Upper lobe of right lung (tissue), 1 donor: ENCODE measurements at regions of chrX and their contacts with region 1.

Region 1: DNA sequence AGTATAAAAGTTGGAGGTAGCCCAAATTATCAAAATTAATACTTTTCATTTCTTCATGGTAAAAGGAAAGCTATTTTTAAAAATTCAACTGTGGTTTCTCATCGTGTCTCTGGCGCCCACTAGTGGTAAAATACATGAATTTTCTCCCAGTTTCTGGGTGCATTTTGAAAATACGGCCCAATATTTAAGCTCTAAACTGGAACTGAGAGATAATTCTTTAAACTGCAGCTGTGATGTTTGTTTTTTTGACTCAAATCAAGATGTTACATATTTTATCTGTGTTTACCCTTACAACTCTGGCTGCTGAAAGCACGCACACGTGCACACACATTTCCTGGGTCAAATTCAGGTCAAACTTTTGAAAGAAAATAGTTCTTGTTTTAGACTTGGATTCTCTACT is 123.9 kb upstream of the ACSL4 start:
- DNase-seq: no peak
- ATAC-seq: no peak
- H3K4me3 ChIP-seq: no peak overlapping the region
- H3K27ac ChIP-seq: no peak overlapping the region
- H3K4me1 ChIP-seq: peaks cover 6% of the 10 kb centered on the region
- H3K27me3 ChIP-seq: no peaks in the 10 kb centered on the region
- CTCF ChIP-seq: peak; percentile 71

Region 2: DNA sequence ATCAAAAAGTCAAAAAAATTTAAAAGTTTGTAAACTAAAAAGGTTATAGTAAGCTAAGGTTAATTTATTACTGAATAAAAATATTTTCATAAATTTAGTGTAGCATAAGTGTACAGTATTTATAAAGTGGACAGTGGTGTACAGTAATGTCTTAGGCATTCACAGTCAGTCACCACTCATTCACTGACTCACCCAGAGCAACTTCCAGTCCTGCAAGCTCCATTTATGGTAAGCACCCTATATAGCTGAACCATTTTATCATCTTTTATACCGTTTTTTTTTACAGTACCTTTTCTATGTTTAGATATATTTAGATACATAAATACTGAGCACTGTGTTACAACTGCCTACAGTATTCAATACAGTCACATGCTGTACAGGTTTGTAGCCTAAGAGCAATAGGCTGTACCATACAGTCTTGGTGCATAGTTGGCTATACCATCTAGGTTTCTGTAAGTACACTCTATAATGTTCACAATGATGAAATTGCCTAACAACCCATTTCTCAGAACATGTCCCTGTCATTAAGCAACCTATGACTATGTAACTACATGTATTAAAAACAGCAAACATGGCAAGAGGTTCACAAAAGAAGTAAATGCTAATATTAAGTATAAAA is 142.5 kb before region 1 on chrX:
- intact Hi-C with region 1: loop called (anchors 10 kb)
- DNase-seq: no peak
- ATAC-seq: no peak
- H3K4me3 ChIP-seq: no peak overlapping the region
- H3K27ac ChIP-seq: no peak overlapping the region
- H3K4me1 ChIP-seq: peaks cover 4% of the 10 kb centered on the region
- H3K27me3 ChIP-seq: no peaks in the 10 kb centered on the region
- CTCF ChIP-seq: no peak

Region 3: DNA sequence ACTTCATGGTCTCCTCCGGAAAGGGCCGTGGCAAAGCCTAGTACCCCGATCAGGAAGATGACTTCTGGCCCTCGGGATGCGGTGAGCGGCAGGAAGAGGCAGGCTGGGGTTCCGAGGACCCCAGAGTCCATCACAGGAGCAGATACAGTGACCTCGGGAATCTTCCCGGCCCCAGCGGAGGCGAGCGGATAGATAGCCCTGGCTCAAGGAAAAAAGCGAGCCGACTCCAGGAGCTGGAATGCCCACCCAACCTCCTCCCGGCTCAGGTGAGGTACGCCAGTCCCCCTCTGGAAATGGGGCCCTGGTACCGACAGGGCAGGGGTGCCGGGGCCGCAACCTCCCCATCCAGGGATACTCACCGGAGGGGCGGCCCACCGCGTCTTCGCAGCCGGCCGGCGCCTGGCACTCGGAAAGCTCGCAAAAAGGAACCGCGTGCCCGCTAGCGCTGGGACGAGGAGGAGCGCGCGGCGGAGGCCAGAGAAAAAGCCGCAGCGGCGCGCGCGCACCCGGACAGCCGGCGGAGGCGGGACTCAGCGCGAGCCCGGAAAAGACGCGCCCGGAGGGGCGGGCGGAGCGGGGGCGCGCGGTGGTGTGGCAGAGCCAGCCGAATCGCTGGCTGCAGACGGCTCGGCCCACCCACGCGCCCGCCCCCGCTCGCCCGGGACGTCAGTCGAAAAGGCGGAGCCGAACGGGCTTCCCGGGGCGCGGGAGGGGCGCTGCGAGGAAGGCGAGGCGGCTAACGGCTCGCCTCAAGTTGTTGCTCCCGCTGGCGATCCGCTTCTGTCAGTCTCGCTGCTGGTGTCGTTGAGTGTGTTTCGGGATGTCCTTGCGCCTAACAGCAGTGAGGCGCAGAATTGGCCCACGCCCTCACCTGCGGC is 124.0 kb before region 1 on chrX and contains the start of gene ACSL4:
- intact Hi-C with region 1: no loop called
- DNase-seq: peak; percentile 96
- ATAC-seq: peak; percentile 99
- H3K4me3 ChIP-seq: peak within 1 kb of the TSS; percentile 67
- H3K27ac ChIP-seq: peak within 1 kb of the TSS; percentile 87
- H3K4me1 ChIP-seq: no peaks in the 10 kb centered on the region
- H3K27me3 ChIP-seq: no peaks in the 10 kb centered on the region
- CTCF ChIP-seq: no peak
- total RNA-seq, gene ACSL4: 140 TPM